Adrenal gland (tissue), 19 donors: ENCODE measurements at regions of chr1 and their contacts with region 1.

Region 1: DNA sequence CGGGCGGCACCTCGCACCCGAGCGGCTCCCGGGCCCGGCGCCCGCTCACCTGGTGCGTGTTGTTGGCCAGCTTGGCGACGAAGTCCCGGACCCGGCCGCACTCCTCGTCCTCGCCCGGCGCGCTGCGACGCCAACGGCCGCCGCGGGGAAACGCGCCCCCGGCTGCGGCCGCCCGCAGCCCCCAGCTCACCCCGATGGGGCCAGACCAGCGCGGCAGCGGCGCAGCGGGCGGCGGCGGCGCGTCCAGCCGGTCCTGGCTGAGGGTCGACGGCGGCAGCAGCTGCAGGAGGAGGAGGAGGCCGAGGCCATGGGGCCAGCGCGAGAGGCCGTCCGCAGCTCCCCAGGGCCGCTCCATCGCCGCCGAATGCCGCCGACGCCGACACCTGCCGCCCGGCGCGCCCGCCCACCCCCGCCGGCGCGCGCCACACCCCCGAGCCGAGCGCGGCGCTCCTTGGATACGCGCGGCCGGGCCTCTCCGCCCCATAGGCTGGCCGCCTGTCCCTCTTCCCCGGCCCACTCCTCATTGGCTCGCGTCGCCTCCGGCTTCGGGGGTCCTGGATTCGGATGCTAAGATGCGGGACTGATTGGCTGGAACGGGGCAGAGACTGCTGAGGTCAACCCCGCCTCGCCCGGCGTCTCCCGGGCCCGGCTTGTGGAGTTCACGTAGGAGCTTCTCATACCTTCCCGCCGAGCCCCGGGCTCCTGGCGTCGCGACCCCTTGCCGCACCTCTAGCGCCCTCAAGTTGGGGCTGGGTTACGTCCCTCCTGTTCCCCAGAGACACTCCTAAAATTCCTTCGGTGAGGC is at the start of gene SORT1:
- DNase-seq: peak; percentile 78 to 93 (median 85)
- H3K4me3 ChIP-seq: peak within 1 kb of the TSS; percentile 26 to 84 (median 41)
- H3K27ac ChIP-seq: peak within 1 kb of the TSS in 3 of 5 donors; percentile 17 to 78 (median 18)
- H3K4me1 ChIP-seq: peaks cover 8 to 57% of the 10 kb centered on the region in 2 donors
- H3K27me3 ChIP-seq: no peaks in the 10 kb centered on the region
- CTCF ChIP-seq: peak in 2 of 6 experiments; percentile 5 to 29
- POLR2A ChIP-seq: peak in 1 of 2 donors; percentile 70
- total RNA-seq, gene SORT1: 20.1 to 56.8 (median 41.8) TPM

Region 2: DNA sequence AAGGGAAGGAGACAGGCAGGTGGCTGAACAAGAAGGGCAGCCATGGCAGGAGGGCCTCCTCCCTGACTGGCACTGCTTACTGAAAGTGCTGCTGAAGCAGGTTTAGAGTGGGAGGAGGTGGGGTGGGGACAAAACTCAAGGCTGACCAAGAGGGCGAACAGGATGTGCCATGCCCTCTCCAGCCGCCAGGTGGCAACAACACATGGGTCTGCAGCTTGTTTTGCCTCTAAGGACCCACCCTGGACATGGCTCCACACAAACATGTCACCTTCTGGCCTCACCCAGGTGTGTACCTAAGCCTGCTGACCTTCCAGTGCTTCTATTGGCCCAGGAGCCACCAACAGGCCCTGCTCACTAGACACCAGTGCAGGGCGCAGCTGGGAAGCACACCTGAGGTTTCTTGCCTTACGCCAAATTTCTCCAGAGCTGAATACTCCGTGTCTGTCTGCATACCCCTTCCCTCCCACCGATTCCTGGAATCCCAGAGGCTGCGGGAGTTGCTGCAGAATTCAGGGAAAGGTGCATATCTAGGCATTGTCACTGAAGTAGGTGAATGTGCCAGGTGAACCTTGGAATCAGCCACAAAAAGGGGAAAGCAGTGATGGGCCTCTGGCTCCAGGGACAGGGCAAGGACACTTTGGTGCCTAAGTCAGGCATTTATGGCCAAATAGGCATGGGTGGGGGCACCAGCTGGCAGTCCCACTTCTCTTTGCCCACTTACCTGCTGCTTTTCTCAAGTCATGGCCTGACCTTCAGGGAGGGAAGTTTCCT is 120.1 kb before region 1 on chr1:
- intact Hi-C with region 1: loop called (anchors 2 to 5 kb)
- DNase-seq: peak; percentile 78 to 94 (median 84)
- H3K4me3 ChIP-seq: no peak overlapping the region
- H3K27ac ChIP-seq: no peak overlapping the region
- H3K4me1 ChIP-seq: peaks cover 0 to 14% of the 10 kb centered on the region in 2 donors
- H3K27me3 ChIP-seq: no peaks in the 10 kb centered on the region
- CTCF ChIP-seq: peak; percentile 87 to 96 (median 92)
- POLR2A ChIP-seq: no peak